ENCODE measurements at regions of chr17 and their contacts with region 1.

Region 1: GRCh38 chr17:8041249-8041928 is 2.5 kb downstream of the ALOX15B start:
- DNase-seq: peak; percentile 72
- ATAC-seq: peak; percentile 84
- H3K4me3 Mint-ChIP-seq: no peak overlapping the region
- H3K27ac Mint-ChIP-seq: no peak overlapping the region
- H3K4me1 Mint-ChIP-seq: no peaks in the 10 kb centered on the region
- H3K27me3 Mint-ChIP-seq: peaks cover 25% of the 10 kb centered on the region

Region 2: GRCh38 chr17:7825206-7825990 is 216.0 kb before region 1 on chr17:
- CTCF ChIA-PET with region 1: interaction called, 5 read pairs
- POLR2A ChIA-PET with region 1: no interaction called
- intact Hi-C with region 1: loop called in 1 of 2 experiments (anchors 1 kb)
- DNase-seq: no peak
- ATAC-seq: peak; percentile 72
- H3K4me3 Mint-ChIP-seq: no peak overlapping the region
- H3K27ac Mint-ChIP-seq: no peak overlapping the region
- H3K4me1 Mint-ChIP-seq: peaks cover 3% of the 10 kb centered on the region
- H3K27me3 Mint-ChIP-seq: no peaks in the 10 kb centered on the region

Region 3: DNA sequence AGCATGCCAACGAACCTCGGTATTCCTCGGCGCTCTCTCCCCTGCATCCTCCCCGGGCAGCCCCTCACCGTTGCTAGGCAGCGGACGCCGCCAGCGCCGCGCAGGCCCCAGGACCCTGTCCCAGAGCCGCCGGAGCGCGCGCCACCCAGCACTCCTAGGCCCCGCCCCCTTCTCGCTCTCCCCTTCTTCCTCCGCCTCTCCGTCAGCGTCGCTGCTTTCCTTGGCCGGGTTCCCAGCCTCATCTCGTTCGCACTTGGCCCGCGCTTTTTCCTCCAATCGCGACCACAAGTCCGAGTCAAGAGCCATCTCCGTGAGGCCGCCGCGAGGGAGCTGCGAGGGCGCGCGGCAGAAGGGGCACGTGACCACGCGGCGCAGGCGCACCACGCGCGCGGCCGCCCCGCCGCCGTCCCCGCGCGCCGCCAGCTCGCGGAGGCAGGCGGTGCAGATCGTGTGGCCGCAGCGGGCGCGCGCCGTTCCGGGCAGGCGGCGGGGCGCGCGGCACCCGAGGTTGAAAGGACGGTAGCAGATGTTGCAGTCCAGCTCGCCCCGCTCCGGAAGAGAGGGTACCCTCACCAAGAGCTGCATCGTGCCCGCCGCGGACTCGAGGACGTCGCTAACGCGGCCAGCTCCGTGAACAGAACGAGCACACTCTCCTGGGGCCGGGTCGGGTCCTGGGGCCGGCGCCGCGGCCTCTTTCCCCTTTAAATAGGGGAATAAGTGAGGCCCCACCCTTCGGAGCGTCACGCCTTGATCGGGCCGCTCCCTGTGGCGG is 125.6 kb before region 1 on chr17 and contains the start of gene RNF227:
- CTCF ChIA-PET with region 1: interaction called, 6 read pairs
- POLR2A ChIA-PET with region 1: interaction called, 3 read pairs
- intact Hi-C with region 1: loop called in 1 of 2 experiments (anchors 1 kb)
- DNase-seq: peak; percentile 95
- ATAC-seq: peak; percentile 88
- H3K4me3 Mint-ChIP-seq: peak within 1 kb of the TSS; percentile 86
- H3K27ac Mint-ChIP-seq: peak within 1 kb of the TSS; percentile 82
- H3K4me1 Mint-ChIP-seq: peaks cover 27% of the 10 kb centered on the region
- H3K27me3 Mint-ChIP-seq: no peaks in the 10 kb centered on the region
- total RNA-seq, gene RNF227: 3.8 to 5.6 TPM

Region 4: DNA sequence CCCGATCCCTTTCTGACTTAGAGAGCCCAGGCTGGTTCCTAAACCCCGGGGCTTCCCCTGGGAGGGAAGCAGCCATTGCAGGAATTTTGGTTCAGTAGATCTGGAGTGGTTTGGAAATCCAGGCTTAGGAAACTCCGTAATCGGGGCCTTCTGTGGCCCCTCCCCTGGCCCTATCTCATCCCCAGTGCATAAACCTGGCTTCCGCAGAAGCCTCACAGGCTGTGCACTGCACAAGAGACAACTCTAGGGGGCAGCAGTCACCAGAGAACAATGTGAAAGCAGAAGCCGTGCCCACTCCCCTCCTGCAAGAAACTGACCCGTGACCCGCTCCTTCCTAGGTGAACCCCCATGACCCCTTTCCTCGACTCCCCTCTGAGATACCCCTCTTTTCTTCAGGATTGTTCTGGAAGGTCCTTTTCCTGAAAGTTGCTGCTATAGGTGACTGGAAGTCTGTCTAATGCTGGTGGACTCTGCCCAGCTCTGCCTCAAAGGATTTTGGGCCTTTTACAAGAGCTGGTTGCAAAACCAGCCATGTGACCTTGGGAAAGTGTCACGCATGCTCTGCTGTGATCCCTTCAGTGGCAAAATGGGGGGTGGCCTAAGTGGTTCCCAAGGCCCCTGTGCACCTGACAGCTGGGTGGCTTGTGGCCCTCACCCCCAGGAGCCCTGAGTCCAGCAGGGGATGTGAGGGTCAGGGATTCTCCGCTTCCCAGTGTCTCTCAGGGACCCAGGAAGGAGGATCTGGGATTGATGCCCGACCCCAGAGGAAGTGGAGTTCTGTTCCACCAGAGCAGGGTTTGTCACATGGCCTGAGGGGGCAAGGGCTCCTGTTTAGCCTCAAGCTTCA is 24.5 kb before region 1 on chr17:
- CTCF ChIA-PET with region 1: interaction called, 19 read pairs
- POLR2A ChIA-PET with region 1: no interaction called
- intact Hi-C with region 1: loop called (anchors 1 kb)
- DNase-seq: peak; percentile 80
- ATAC-seq: peak; percentile 91
- H3K4me3 Mint-ChIP-seq: peak overlapping the region; percentile 60
- H3K27ac Mint-ChIP-seq: no peak overlapping the region
- H3K4me1 Mint-ChIP-seq: peaks cover 5% of the 10 kb centered on the region
- H3K27me3 Mint-ChIP-seq: peaks cover 6% of the 10 kb centered on the region